Thyroid gland (tissue), 4 donors: ENCODE measurements at regions of chr20 and their contacts with region 1.

Region 1: GRCh38 chr20:62395311-62396242 is 8.7 kb downstream of the RPS21 start:
- DNase-seq: no peak
- H3K4me3 ChIP-seq: no peak overlapping the region
- H3K27ac ChIP-seq: no peak overlapping the region
- H3K4me1 ChIP-seq: no peaks in the 10 kb centered on the region
- H3K27me3 ChIP-seq: no peaks in the 10 kb centered on the region
- CTCF ChIP-seq: no peak
- POLR2A ChIP-seq: no peak

Region 2: GRCh38 chr20:62097881-62098407 is 297.6 kb before region 1 on chr20:
- intact Hi-C with region 1: no loop called
- DNase-seq: no peak
- H3K4me3 ChIP-seq: no peak overlapping the region
- H3K27ac ChIP-seq: no peak overlapping the region
- H3K4me1 ChIP-seq: no peaks in the 10 kb centered on the region
- H3K27me3 ChIP-seq: no peaks in the 10 kb centered on the region
- CTCF ChIP-seq: no peak
- POLR2A ChIP-seq: no peak

Region 3: DNA sequence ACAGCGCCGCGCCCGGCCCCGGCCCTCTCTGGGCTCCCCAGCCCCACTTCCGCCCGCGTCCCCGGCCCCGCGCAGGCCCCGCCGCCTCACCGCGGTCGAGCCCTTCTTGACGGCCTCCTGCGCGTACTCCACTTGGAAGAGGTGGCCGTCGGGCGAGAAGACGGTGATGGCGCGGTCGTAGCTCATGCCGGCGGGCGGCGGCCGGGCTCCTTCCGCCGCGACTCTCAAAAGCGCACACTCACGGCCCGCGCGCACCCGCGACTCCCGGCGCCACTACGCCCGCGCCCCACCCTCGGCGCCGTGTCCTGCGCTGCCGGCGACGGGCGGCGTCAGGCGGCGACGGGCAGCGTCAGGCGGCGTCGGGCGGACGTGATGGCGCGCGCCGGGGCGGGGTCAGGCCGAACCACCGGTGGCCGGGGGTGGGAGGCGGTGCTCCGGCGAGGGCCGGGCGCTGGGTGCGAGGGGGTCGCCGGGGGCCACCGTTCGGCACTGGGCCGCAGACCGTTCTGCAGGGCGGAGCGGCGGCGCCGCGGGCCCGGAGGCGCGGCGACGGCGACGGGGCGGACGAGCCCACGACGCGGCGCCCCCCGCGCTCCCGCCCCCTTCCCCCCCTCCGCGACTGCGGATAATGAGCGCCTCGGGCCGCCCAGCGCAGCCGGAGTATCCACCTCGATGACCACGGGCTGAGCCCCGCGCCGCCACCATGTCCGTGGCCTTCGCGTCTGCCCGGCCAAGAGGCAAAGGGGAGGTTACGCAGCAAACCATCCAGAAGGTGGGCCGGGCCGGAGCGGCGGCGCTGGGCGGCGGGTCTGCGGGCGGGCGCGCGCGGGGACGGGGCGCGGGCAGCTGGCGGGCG is 252.2 kb before region 1 on chr20 and contains the starts of genes PSMA7 and SS18L1:
- intact Hi-C with region 1: loop called (anchors 10 kb)
- DNase-seq: peak; percentile 86 to 87
- H3K4me3 ChIP-seq: peak within 1 kb of the TSS; percentile 57 to 76 (median 67)
- H3K27ac ChIP-seq: peak within 1 kb of the TSS; percentile 70 to 93 (median 76)
- H3K4me1 ChIP-seq: peaks cover 21 to 33% of the 10 kb centered on the region in 2 donors
- H3K27me3 ChIP-seq: no peaks in the 10 kb centered on the region
- CTCF ChIP-seq: no peak
- POLR2A ChIP-seq: peak; percentile 54 to 92
- total RNA-seq, gene PSMA7: 213 to 288 (median 261) TPM
- total RNA-seq, gene SS18L1: 12.2 to 22.0 (median 15.2) TPM

Region 4: GRCh38 chr20:62201173-62202082 is 194.1 kb before region 1 on chr20:
- intact Hi-C with region 1: no loop called
- DNase-seq: no peak
- H3K4me3 ChIP-seq: no peak overlapping the region
- H3K27ac ChIP-seq: no peak overlapping the region
- H3K4me1 ChIP-seq: no peaks in the 10 kb centered on the region
- H3K27me3 ChIP-seq: no peaks in the 10 kb centered on the region
- CTCF ChIP-seq: no peak
- POLR2A ChIP-seq: no peak